Breast epithelium (tissue), 4 donors: ENCODE measurements at regions of chr16 and their contacts with region 1.

Region 1: GRCh38 chr16:59290718-59291117 is 556.6 kb upstream of the GOT2 start:
- DNase-seq: no peak
- H3K4me3 ChIP-seq: no peak overlapping the region
- H3K27ac ChIP-seq: no peak overlapping the region
- H3K4me1 ChIP-seq: no peaks in the 10 kb centered on the region
- H3K27me3 ChIP-seq: no peaks in the 10 kb centered on the region
- CTCF ChIP-seq: no peak
- POLR2A ChIP-seq: no peak

Region 2: DNA sequence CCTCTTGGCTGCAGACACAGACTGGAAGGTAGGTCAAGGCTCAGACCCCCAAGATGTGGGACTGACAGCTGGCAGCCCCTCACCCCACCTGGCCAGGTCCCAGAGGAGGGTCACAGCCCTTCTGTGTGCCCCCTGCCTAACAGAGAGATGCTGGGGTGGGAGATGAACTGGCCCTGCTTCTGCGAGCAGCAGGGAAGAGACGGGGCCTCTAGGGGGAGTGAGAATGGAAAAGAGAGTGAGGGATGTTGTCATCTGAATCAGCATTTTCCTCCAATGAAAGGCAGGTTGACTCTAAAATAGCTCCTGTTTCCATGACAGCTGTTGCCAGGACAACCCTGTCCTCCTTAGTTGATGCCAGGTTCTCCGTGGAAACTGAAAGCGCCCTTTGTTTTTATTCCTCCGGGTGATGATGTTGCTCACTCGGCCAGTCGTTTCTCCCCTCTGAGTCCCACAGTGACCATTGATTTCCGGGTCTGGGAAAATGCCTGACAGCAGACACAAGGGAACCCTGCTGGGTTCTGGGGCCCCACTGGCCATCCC is 795.7 kb before region 1 on chr16:
- intact Hi-C with region 1: no loop called
- DNase-seq: peak; percentile 49 to 68
- H3K4me3 ChIP-seq: peak overlapping the region in 1 of 3 donors; percentile 31
- H3K27ac ChIP-seq: peak overlapping the region in 1 of 2 donors; percentile 79
- H3K4me1 ChIP-seq: no peaks in the 10 kb centered on the region
- H3K27me3 ChIP-seq: no peaks in the 10 kb centered on the region
- CTCF ChIP-seq: peak in 1 of 3 donors; percentile 25
- POLR2A ChIP-seq: no peak

Region 3: GRCh38 chr16:58999762-59000161 is 291.0 kb before region 1 on chr16:
- intact Hi-C with region 1: loop called (anchors 5 kb)
- DNase-seq: no peak
- H3K4me3 ChIP-seq: no peak overlapping the region
- H3K27ac ChIP-seq: no peak overlapping the region
- H3K4me1 ChIP-seq: no peaks in the 10 kb centered on the region
- H3K27me3 ChIP-seq: no peaks in the 10 kb centered on the region
- CTCF ChIP-seq: no peak
- POLR2A ChIP-seq: no peak